ENCODE measurements at regions of chr7 and their contacts with region 1.

Region 1: DNA sequence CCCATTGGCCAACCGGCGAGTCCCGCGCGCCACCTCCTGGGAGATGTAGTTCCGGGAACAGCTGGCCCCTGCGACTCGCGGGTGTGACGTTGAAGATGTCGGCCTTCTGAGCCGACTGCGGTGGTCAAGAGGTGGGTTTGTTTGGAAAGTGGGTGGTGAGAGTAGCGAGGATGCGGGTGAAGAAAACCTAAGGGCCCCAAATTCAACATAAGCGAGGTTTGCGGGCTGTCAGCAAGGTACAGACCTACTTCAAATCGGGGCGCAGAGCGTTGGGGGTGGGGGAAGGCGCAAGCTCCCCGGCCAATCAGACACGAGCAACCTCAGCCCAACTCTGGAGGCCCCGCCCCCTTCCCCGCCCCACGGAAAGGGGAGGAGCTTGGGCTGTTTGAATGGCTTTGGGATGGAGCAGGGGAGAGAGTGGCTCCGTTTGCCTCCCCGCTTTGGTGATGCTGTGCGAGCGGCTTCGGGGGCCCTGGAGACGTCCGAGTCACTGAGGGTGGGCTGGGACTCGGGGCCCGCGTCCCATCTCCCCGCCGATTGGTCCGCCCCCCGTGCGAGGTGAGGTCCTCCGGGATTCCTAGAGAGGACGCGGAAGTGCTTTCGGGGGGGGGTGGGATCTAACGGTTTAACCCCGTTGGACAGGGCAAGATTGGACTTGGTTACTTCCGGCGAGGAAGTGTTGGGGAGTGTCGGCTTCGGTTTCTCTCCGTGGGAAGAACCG is at the start of gene ZKSCAN5:
- DNase-seq: peak; percentile 94 to 100 (median 99)

Region 2: DNA sequence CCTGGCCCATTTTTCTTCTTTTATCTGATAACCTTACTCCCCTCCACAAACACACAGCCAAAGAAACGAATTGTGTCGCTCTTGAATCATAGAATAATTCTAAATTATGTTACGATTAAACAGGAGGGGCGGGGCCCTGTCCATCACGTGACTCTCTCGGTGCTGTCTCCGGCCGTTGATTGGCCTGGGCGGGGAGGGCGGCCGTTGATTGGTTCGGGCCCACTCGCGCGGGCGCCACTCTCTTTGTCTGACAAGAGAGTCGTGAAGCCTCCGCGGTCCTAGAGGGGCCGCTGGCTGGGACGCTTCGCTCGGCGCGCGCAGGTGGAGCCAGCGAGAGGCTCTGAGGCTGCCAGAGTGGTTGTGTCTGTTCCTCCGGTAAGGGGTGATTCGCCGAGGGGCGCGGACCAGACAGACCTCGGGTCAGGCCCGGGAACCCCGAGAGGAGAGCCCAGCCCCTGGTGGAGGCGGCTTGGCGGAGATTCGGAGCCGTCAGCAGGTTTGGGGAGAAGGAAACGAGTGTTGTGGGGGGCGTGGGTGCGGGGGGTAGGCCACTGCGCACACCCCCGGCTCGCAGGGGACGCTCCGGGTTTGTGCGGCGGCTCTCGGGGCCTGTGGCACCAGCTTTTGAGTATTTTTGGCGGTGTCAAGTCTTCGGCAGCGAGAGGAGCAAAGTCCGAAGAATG is 32.1 kb before region 1 on chr7 and contains the start of gene ZNF789:
- intact Hi-C with region 1: loop called (anchors 1 kb)
- DNase-seq: peak; percentile 98 to 100 (median 99)

Region 3: GRCh38 chr7:99525713-99526440 is 21.1 kb after region 1 on chr7:
- intact Hi-C with region 1: no loop called
- DNase-seq: no peak

Region 4: DNA sequence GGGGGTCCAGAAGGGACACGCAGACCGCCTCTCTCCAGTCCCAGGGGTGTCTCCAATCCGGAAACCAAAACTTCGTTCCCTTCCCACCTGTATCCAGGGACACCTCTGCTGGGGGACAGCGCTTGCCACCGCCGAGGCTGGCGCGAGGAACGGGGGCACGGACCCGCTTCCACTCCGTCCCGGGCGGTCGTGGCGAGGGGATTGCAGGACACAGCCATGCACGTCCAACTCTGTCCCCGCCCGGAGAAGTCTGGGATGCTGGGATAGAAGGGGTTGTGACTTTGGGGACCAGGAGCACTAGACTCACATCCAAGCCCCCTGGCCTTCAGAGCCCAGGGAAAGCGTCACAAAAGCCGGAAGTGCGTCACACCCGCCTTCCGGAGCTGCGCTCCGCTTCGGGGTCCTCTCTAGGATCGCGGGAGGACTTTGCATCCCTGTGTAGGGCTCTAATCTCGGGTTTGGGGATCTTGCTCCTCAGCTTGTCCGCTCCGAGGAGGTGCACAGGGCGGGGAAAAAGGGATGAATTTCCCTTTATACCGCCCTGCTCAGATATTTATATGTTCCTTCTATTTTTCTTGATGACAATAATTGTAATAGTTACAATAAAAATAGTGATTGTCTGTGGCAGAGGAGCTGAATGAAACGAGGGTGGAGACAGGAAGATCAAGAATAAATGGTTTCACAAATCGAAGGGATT is 47.2 kb after region 1 on chr7 and contains the start of gene FAM200A:
- intact Hi-C with region 1: loop called (anchors 2 kb)
- DNase-seq: peak; percentile 84 to 98 (median 90)

Measured in posterior cingulate gyrus (tissue), 11 donors.